ENCODE measurements at regions of chr18 and their contacts with region 1.

Region 1: GRCh38 chr18:51668101-51668500 is 470.6 kb upstream of the MEX3C start:
- DNase-seq: peak; percentile 41
- ATAC-seq: peak; percentile 83
- H3K4me3 ChIP-seq: no peak overlapping the region
- H3K27ac ChIP-seq: no peak overlapping the region
- H3K4me1 ChIP-seq: no peaks in the 10 kb centered on the region
- H3K27me3 ChIP-seq: no peaks in the 10 kb centered on the region
- CTCF ChIP-seq: peak; percentile 86
- EP300 ChIP-seq: no peak
- POLR2A ChIP-seq: no peak
- RAD21 ChIP-seq: peak; percentile 77

Region 2: GRCh38 chr18:51110073-51110803 is 557.9 kb before region 1 on chr18:
- CTCF ChIA-PET with region 1: no interaction called
- POLR2A ChIA-PET with region 1: no interaction called
- in situ Hi-C with region 1: loop called (anchors 25 kb)
- intact Hi-C with region 1: no loop called
- DNase-seq: peak; percentile 15
- ATAC-seq: peak; percentile 99
- H3K4me3 ChIP-seq: peak overlapping the region in 1 of 3 experiments; percentile 61; a peak in 2 of 6 replicates
- H3K27ac ChIP-seq: no peak overlapping the region
- H3K4me1 ChIP-seq: peaks cover 10% of the 10 kb centered on the region
- H3K27me3 ChIP-seq: no peaks in the 10 kb centered on the region
- CTCF ChIP-seq: peak; percentile 99
- EP300 ChIP-seq: no peak
- POLR2A ChIP-seq: no peak
- RAD21 ChIP-seq: peak; percentile 98

Region 3: GRCh38 chr18:51751901-51752300 is 83.8 kb after region 1 on chr18:
- CTCF ChIA-PET with region 1: no interaction called
- POLR2A ChIA-PET with region 1: no interaction called
- in situ Hi-C with region 1: loop called (anchors 25 kb)
- intact Hi-C with region 1: no loop called
- DNase-seq: no peak
- ATAC-seq: no peak
- H3K4me3 ChIP-seq: no peak overlapping the region
- H3K27ac ChIP-seq: no peak overlapping the region
- H3K4me1 ChIP-seq: peaks cover 2% of the 10 kb centered on the region; the same call in 1 of the 2 replicates
- H3K27me3 ChIP-seq: no peaks in the 10 kb centered on the region; a peak in 1 of 5 replicates
- CTCF ChIP-seq: no peak
- EP300 ChIP-seq: no peak
- POLR2A ChIP-seq: no peak
- RAD21 ChIP-seq: no peak

Region 4: GRCh38 chr18:52288403-52289004 is 620.4 kb after region 1 on chr18:
- CTCF ChIA-PET with region 1: interaction called, 18 read pairs
- POLR2A ChIA-PET with region 1: no interaction called
- in situ Hi-C with region 1: loop called (anchors 5 kb)
- intact Hi-C with region 1: loop called (anchors 1 kb)
- DNase-seq: peak; percentile 17
- ATAC-seq: peak; percentile 85
- H3K4me3 ChIP-seq: no peak overlapping the region
- H3K27ac ChIP-seq: no peak overlapping the region
- H3K4me1 ChIP-seq: no peaks in the 10 kb centered on the region
- H3K27me3 ChIP-seq: no peaks in the 10 kb centered on the region
- CTCF ChIP-seq: peak; percentile 82
- EP300 ChIP-seq: no peak
- POLR2A ChIP-seq: no peak
- RAD21 ChIP-seq: peak; percentile 64

Region 5: DNA sequence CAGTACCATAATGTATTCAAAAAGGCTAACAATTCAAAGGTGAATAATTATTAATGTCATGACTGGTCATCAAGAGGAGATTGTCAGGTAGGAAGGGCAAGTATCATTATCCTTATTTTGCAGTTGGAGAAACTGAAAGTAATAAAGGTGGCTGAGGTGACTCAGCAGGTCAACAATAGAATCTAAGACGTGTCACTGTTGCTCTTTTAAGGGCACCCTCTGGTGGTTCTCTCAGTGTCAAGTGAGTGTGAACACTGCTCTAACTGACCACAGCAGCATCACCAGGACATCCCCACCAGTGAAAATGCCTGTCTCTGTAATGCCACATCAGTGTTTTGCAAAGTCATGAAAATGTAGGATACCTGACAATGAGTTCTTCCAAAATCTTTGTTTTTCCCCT is 741.6 kb after region 1 on chr18:
- CTCF ChIA-PET with region 1: no interaction called
- POLR2A ChIA-PET with region 1: no interaction called
- in situ Hi-C with region 1: no loop called
- intact Hi-C with region 1: loop called (anchors 2 kb)
- DNase-seq: peak; percentile 12
- ATAC-seq: peak; percentile 85
- H3K4me3 ChIP-seq: 0 out of 6 replicates have a peak overlapping the region, but pooled peaks of 1 of the 3 experiments have one; percentile 7
- H3K27ac ChIP-seq: no peak overlapping the region
- H3K4me1 ChIP-seq: no peaks in the 10 kb centered on the region
- H3K27me3 ChIP-seq: no peaks in the 10 kb centered on the region
- CTCF ChIP-seq: no peak
- EP300 ChIP-seq: no peak
- POLR2A ChIP-seq: no peak
- RAD21 ChIP-seq: no peak

Region 6: GRCh38 chr18:52670896-52671295 is 1002.8 kb after region 1 on chr18:
- CTCF ChIA-PET with region 1: no interaction called
- POLR2A ChIA-PET with region 1: no interaction called
- in situ Hi-C with region 1: no loop called
- intact Hi-C with region 1: loop called (anchors 2 kb)
- DNase-seq: peak; percentile 4
- ATAC-seq: no peak
- H3K4me3 ChIP-seq: no peak overlapping the region
- H3K27ac ChIP-seq: no peak overlapping the region
- H3K4me1 ChIP-seq: no peaks in the 10 kb centered on the region
- H3K27me3 ChIP-seq: no peaks in the 10 kb centered on the region
- CTCF ChIP-seq: no peak
- EP300 ChIP-seq: no peak
- POLR2A ChIP-seq: no peak
- RAD21 ChIP-seq: no peak

Region 7: DNA sequence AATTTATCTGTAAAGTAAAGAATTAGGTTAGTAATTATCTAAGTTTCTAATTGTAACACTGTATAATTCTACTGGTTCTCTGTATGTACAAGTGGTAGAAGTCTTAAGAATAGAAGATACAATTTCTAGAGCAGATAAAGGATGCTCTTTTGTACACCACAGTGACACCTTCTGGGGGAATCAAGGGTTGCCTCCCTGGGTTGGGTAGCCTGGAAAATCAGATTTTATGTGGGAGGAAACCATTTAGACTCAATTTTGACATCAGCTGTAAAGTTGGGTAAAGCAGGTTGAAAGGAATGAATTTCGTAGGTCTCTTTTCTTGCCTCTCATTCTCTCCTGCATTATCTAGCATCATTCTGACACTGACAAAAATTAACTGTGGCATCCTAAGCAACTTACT is 1026.7 kb after region 1 on chr18:
- CTCF ChIA-PET with region 1: no interaction called
- POLR2A ChIA-PET with region 1: no interaction called
- in situ Hi-C with region 1: no loop called
- intact Hi-C with region 1: loop called (anchors 5 kb)
- DNase-seq: no peak
- ATAC-seq: peak; percentile 37; the same call in 1 of the 3 replicates
- H3K4me3 ChIP-seq: no peak overlapping the region
- H3K27ac ChIP-seq: no peak overlapping the region
- H3K4me1 ChIP-seq: no peaks in the 10 kb centered on the region
- H3K27me3 ChIP-seq: no peaks in the 10 kb centered on the region
- CTCF ChIP-seq: no peak
- EP300 ChIP-seq: no peak
- POLR2A ChIP-seq: no peak
- RAD21 ChIP-seq: no peak

Measured in HepG2 (cell line).